Breast epithelium (tissue), 4 donors: ENCODE measurements at regions of chr9 and their contacts with region 1.

Region 1: DNA sequence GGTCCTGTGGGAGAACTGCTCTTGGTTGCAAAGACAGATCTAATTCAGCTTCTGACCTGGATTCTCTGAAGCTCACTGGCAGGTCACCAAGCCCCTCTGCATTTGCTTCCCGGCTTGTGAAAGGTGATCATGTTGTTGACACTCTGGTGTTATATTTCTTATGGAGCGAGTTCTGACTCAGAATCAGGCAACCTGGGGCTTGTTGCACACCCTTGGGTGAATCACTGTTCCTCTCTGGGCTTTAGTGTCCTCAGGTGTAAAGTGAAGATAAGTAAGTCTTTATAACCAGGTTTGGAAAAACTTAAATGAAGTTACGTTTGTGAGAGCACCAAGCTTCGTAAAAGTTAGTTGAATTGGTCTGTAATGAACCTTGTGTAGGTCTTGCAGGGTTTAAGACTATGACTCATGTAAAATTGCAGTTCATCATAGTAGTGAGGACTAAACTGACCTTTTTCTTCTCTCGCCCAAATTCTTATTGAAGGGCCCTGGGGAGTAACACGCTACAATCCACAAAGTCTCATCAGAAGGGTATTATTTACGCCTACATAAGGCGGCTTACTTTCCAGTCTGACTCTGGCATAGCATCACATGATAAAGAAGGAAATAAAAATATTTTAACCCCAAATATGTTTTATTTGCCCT is 218.6 kb downstream of the TMEM38B start:
- DNase-seq: no peak
- H3K4me3 ChIP-seq: no peak overlapping the region
- H3K27ac ChIP-seq: no peak overlapping the region
- H3K4me1 ChIP-seq: no peaks in the 10 kb centered on the region
- H3K27me3 ChIP-seq: no peaks in the 10 kb centered on the region
- CTCF ChIP-seq: no peak
- POLR2A ChIP-seq: no peak

Region 2: GRCh38 chr9:105901514-105902109 is 11.4 kb before region 1 on chr9:
- intact Hi-C with region 1: loop called (anchors 1 kb)
- DNase-seq: no peak
- H3K4me3 ChIP-seq: no peak overlapping the region
- H3K27ac ChIP-seq: no peak overlapping the region
- H3K4me1 ChIP-seq: no peaks in the 10 kb centered on the region
- H3K27me3 ChIP-seq: no peaks in the 10 kb centered on the region
- CTCF ChIP-seq: peak in 2 of 3 donors; percentile 44 to 61
- POLR2A ChIP-seq: no peak